Ascending aorta (tissue), 2 donors: ENCODE measurements at regions of chr1 and their contacts with region 1.

Region 1: DNA sequence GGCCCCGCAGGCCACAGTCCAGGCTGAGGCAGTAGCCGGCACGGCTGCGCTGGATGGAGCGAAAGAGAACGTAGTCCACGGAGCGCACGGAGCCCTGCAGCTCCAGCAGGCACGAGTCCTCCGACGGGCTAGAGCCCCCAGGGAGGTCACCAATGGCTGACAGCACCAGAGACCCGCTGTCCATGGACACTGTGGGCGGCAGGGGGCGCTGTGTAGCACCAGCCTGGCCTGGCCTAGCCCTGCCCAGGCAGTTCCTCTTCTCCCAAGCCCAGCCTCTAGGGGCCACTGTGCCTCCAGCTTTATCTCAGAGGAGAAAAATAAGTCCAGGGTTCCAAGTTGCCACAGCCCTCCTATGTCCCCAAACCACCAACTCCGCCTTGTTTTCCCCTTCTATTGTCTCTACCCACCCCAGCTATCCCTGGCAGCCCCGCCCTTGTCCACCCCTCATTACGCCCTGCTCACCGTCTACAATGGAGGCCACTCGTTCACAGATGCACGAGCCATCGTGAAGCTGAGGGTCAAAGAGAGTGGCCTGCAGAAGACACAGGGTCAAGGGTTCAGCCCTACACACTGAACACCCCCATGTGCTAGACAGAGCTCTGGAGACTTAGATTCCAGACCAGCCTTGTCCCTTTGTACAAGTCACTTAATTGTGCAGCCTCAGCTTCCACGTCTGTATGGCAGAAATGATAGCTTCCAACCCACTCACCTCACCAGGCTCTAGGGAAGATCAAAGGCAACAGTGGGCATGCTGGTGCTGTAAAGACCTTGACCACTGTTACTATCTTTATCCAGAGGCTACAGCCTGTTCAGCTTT is 4.4 kb downstream of the ENTREP3 start:
- DNase-seq: peak; percentile 55 to 96
- H3K4me3 ChIP-seq: peak overlapping the region; percentile 37 to 42
- H3K27ac ChIP-seq: peak overlapping the region; percentile 19 to 39
- H3K4me1 ChIP-seq: peaks cover 16 to 21% of the 10 kb centered on the region in 2 donors
- H3K27me3 ChIP-seq: no peaks in the 10 kb centered on the region
- CTCF ChIP-seq: peak; percentile 99 to 100 (median 99)

Region 2: GRCh38 chr1:154714052-154714623 is 536.7 kb before region 1 on chr1:
- intact Hi-C with region 1: no loop called
- DNase-seq: no peak
- H3K4me3 ChIP-seq: no peak overlapping the region
- H3K27ac ChIP-seq: no peak overlapping the region
- H3K4me1 ChIP-seq: no peaks in the 10 kb centered on the region
- H3K27me3 ChIP-seq: no peaks in the 10 kb centered on the region
- CTCF ChIP-seq: no peak

Region 3: GRCh38 chr1:155308493-155309422 is 57.9 kb after region 1 on chr1 and contains the start of gene FDPS:
- intact Hi-C with region 1: loop called (anchors 1 kb)
- DNase-seq: peak; percentile 98 to 100
- H3K4me3 ChIP-seq: peak within 1 kb of the TSS; percentile 70 to 77
- H3K27ac ChIP-seq: peak within 1 kb of the TSS; percentile 87
- H3K4me1 ChIP-seq: peaks cover 6 to 9% of the 10 kb centered on the region in 2 donors
- H3K27me3 ChIP-seq: no peaks in the 10 kb centered on the region
- CTCF ChIP-seq: peak in 1 of 3 experiments; percentile 23
- total RNA-seq, gene FDPS: 51.7 TPM

Region 4: GRCh38 chr1:155379631-155380090 is 128.8 kb after region 1 on chr1:
- intact Hi-C with region 1: loop called (anchors 5 kb)
- DNase-seq: no peak
- H3K4me3 ChIP-seq: peak overlapping the region; percentile 19 to 42
- H3K27ac ChIP-seq: peak overlapping the region in 1 of 2 donors; percentile 45
- H3K4me1 ChIP-seq: peaks cover 0 to 21% of the 10 kb centered on the region in 2 donors
- H3K27me3 ChIP-seq: no peaks in the 10 kb centered on the region
- CTCF ChIP-seq: no peak

Region 5: DNA sequence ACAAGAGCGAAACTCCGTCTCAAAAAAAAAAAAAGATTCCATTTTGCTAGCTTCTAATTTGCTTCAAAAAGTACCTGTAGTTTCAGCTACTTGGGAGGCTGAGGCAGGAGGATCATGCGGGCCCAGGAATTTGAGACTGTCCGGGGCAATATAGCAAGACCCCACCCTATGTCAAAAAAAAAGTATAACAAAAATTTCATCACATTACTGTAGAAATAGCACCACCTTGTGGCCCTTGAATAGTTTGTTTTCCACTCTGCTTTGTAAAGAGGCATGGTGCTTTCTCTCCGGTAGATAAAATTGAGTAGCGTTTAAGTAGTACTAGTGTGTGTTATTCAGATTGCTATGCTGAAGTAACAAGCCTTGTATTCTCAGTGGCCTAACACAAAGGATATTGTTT is 340.9 kb after region 1 on chr1:
- intact Hi-C with region 1: loop called (anchors 1 kb)
- DNase-seq: no peak
- H3K4me3 ChIP-seq: no peak overlapping the region
- H3K27ac ChIP-seq: no peak overlapping the region
- H3K4me1 ChIP-seq: no peaks in the 10 kb centered on the region
- H3K27me3 ChIP-seq: no peaks in the 10 kb centered on the region
- CTCF ChIP-seq: peak; percentile 29 to 58 (median 43)